Dendritic cell treated with granulocyte-macrophage colony-stimulating factor and Interleukin-4, amounts not matched to agents 40 ng/mL and 50 ng/mL, for 4 days (primary cell): ENCODE measurements at regions of chr7 and their contacts with region 1.

Region 1: GRCh38 chr7:148940702-148941597 is 56.9 kb upstream of the EZH2 start:
- H3K4me3 Mint-ChIP-seq: peak overlapping the region; percentile 85
- H3K27ac Mint-ChIP-seq: peak overlapping the region; percentile 97
- H3K4me1 Mint-ChIP-seq: peaks cover 11% of the 10 kb centered on the region
- H3K27me3 Mint-ChIP-seq: no peaks in the 10 kb centered on the region

Region 2: GRCh38 chr7:148884299-148885022 is 56.5 kb before region 1 on chr7:
- intact Hi-C with region 1: loop called (anchors 2 kb)
- H3K4me3 Mint-ChIP-seq: peak overlapping the region; percentile 80
- H3K27ac Mint-ChIP-seq: peak overlapping the region; percentile 88
- H3K4me1 Mint-ChIP-seq: peaks cover 21% of the 10 kb centered on the region
- H3K27me3 Mint-ChIP-seq: no peaks in the 10 kb centered on the region

Region 3: DNA sequence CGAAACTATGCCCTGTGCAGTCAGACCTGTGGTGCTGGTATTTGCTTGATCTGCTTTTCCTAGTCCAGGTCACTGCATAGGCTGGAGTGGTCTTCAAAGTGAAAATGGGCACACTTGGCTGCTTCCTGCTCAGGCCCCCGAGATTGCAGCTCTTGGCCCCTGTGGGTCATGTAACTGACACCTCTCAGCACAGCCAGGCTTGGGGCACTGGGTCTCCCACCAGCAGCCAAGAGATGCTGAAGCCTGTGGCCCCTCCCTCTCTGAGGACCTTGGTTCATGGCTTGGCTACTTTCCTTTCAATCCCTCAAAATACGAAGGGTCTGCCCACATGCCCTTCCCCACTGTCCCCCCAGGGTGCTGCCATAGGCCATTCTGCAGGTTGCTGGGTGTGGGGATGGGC is 53.7 kb after region 1 on chr7:
- intact Hi-C with region 1: no loop called
- H3K4me3 Mint-ChIP-seq: no peak overlapping the region
- H3K27ac Mint-ChIP-seq: peak overlapping the region; percentile 56
- H3K4me1 Mint-ChIP-seq: no peaks in the 10 kb centered on the region
- H3K27me3 Mint-ChIP-seq: no peaks in the 10 kb centered on the region